Activated CD8-positive, alpha-beta memory T cell treated with anti-CD3 and anti-CD28 coated beads, Interleukin-2, amount 10 ng/mL, durations not matched to agents 7 days and 5 days (primary cell): ENCODE measurements at regions of chr10 and their contacts with region 1.

Region 1: GRCh38 chr10:93376372-93377293 is 105.5 kb downstream of the MYOF start:
- DNase-seq: peak; percentile 57
- ATAC-seq: peak; percentile 39
- H3K4me3 Mint-ChIP-seq: no peak overlapping the region
- H3K27ac Mint-ChIP-seq: no peak overlapping the region
- H3K4me1 Mint-ChIP-seq: peaks cover 34% of the 10 kb centered on the region
- H3K27me3 Mint-ChIP-seq: no peaks in the 10 kb centered on the region

Region 2: GRCh38 chr10:93288654-93289634 is 87.7 kb before region 1 on chr10:
- CTCF ChIA-PET with region 1: no interaction called
- DNase-seq: peak; percentile 56
- ATAC-seq: no peak
- H3K4me3 Mint-ChIP-seq: no peak overlapping the region
- H3K27ac Mint-ChIP-seq: no peak overlapping the region
- H3K4me1 Mint-ChIP-seq: no peaks in the 10 kb centered on the region
- H3K27me3 Mint-ChIP-seq: peaks cover 5% of the 10 kb centered on the region

Region 3: GRCh38 chr10:93357680-93358079 is 19.0 kb before region 1 on chr10:
- CTCF ChIA-PET with region 1: interaction called, 21 read pairs
- DNase-seq: no peak
- ATAC-seq: peak; percentile 55
- H3K4me3 Mint-ChIP-seq: no peak overlapping the region
- H3K27ac Mint-ChIP-seq: no peak overlapping the region
- H3K4me1 Mint-ChIP-seq: peaks cover 6% of the 10 kb centered on the region
- H3K27me3 Mint-ChIP-seq: no peaks in the 10 kb centered on the region

Region 4: DNA sequence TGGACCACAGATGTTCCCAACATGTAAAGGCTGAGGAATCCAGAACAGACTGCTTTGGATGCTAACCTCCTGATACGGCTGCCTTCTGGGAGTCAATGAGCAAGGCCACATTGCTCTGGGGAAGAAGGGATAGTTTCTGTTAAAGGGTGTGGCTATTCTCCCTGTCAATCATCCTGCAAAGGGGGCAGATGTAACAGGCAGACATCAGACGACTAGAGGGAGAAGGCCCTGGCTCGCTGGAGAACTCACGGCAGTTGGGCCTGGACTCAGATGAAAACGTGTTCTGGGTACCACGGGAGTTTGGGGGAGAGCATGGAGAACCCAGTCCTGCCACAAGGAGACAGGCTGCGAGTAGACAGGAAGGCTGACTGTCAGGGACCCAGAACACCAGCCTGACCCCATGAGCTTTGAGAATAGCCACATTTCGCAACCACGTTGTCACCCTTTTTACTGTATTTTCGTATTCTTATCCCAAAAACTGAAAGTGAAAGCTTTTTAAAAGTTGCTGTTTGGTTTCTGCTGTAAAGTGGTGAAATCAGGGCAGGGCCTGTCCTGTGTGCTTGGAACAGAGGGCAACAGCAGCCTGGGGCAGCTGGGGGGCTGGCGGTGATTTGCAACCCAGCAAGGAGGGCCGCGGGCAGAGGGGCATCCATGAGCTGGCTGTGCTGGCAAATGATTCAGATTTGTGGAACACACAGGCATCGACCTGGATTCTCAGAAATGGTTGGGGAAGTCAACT is 10.2 kb after region 1 on chr10:
- CTCF ChIA-PET with region 1: interaction called, 33 read pairs
- DNase-seq: peak; percentile 59
- ATAC-seq: peak; percentile 83
- H3K4me3 Mint-ChIP-seq: peak overlapping the region; percentile 65
- H3K27ac Mint-ChIP-seq: peak overlapping the region; percentile 88
- H3K4me1 Mint-ChIP-seq: peaks cover 26% of the 10 kb centered on the region
- H3K27me3 Mint-ChIP-seq: peaks cover 2% of the 10 kb centered on the region

Region 5: DNA sequence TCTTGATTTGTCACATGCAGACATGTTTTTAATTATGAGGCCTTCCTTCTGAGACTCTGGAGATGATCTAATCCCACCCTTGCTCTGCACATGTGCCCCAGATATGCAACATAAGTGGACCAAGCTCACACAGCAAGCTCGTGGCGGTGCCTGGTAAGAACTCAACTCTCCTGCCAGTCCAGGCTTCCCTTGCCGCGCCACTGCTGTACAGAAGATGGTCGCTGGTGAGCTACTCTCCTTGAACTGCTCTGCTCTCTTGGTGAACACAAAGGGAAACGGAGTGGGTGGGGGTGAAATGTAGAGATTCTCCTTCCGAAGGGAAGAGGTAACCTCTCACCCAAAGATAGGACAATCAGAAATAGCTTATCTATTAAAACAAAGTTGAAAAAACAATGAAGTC is 79.8 kb after region 1 on chr10:
- CTCF ChIA-PET with region 1: interaction called, 33 read pairs
- DNase-seq: no peak
- ATAC-seq: no peak
- H3K4me3 Mint-ChIP-seq: no peak overlapping the region
- H3K27ac Mint-ChIP-seq: no peak overlapping the region
- H3K4me1 Mint-ChIP-seq: peaks cover 16% of the 10 kb centered on the region
- H3K27me3 Mint-ChIP-seq: no peaks in the 10 kb centered on the region

Region 6: GRCh38 chr10:93475861-93476269 is 99.2 kb after region 1 on chr10:
- CTCF ChIA-PET with region 1: interaction called, 365 read pairs
- DNase-seq: no peak
- ATAC-seq: no peak
- H3K4me3 Mint-ChIP-seq: no peak overlapping the region
- H3K27ac Mint-ChIP-seq: no peak overlapping the region
- H3K4me1 Mint-ChIP-seq: peaks cover 3% of the 10 kb centered on the region
- H3K27me3 Mint-ChIP-seq: peaks cover 4% of the 10 kb centered on the region

Region 7: GRCh38 chr10:93496322-93497041 is 119.8 kb after region 1 on chr10 and contains the start of gene CEP55:
- CTCF ChIA-PET with region 1: interaction called, 25 read pairs
- DNase-seq: peak; percentile 97
- ATAC-seq: peak; percentile 99
- H3K4me3 Mint-ChIP-seq: peak within 1 kb of the TSS; percentile 96
- H3K27ac Mint-ChIP-seq: peak within 1 kb of the TSS; percentile 96
- H3K4me1 Mint-ChIP-seq: peaks cover 37% of the 10 kb centered on the region
- H3K27me3 Mint-ChIP-seq: no peaks in the 10 kb centered on the region
- total RNA-seq, gene CEP55: 75.6 to 79.3 TPM